ENCODE measurements at regions of chr15 and their contacts with region 1.

Region 1: DNA sequence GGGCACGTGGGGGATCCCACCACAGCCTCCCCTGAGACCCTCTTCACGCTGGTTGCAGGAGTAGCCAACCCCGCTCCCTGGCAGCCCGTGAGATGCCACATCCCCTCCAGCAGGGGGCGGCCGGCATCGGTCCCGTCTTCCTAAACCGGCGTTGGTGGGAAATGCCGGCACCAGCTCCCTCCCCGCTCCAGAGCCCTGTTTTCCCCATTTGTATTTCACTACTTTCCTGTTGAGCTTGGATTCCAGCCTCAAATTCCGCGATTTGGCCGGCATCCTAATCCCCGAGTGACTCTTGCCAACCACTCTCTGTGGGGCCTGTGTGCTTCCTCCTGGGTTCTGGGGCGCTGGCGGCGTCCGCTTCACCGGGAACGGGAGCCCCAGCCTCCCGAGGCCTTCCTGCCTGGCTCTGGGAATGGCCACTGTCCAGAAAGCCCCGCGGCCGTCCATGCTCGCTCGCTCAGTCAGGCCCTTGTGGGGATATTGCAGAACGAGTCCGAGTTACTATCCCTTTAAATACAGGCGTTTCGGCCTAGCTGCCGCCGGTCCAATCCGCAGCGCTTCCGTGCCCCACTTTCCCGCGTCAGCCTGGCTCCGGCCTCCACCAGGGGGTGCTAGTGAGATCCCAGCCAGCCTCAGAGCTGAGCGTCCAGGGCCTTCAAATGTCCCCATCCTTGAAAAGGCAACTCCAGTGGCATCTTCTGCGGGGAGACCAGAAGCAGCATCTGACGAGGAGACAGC is 8.1 kb upstream of the ADAMTS17 start:
- DNase-seq: peak; percentile 95 to 96
- ATAC-seq: peak; percentile 89 to 97
- H3K4me3 ChIP-seq: peak overlapping the region; percentile 60
- H3K27ac ChIP-seq: peak overlapping the region; percentile 90 to 97
- H3K4me1 ChIP-seq: peaks cover 9% of the 10 kb centered on the region
- CTCF ChIP-seq: peak; percentile 75
- EP300 ChIP-seq: no peak
- POLR2A ChIP-seq: no peak
- RAD21 ChIP-seq: peak; percentile 46 to 71

Region 2: DNA sequence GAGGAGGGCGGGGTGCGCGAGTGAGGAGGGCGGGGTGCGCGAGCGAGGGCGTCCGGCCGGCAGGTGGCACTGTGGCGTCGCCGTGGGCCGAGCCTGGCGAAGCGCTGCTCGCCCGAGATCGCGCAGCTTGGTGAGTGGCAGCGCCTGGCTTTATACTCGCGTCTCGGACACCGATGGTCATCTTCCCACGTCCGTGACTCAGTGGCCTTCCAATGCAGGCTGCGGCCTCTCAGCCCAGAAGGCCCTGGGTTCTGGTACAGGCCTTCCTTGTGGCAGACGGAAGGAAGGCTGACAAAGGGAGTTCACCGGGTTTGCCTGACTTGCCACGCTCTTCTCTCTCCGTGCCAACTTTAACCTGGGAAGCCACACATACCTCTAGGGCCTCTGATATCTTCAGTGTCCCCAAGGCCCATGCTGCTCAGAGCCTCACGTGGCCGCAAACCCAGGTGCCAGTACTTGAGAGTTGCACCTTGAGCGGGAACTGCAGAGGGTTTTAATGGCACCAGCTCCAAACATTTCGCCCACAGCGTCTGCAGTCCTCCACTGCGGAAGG is 421.4 kb before region 1 on chr15:
- CTCF ChIA-PET with region 1: interaction called, 25 read pairs
- POLR2A ChIA-PET with region 1: no interaction called
- DNase-seq: peak; percentile 69 to 79
- ATAC-seq: peak; percentile 91 to 96
- H3K4me3 ChIP-seq: peak overlapping the region; percentile 45
- H3K27ac ChIP-seq: peak overlapping the region; percentile 47 to 82; a peak in 5 of 6 replicates
- H3K4me1 ChIP-seq: peaks cover 6% of the 10 kb centered on the region; the same call in 2 of the 3 replicates
- CTCF ChIP-seq: peak; percentile 64
- EP300 ChIP-seq: no peak
- POLR2A ChIP-seq: no peak; the same call in 1 of the 2 replicates
- RAD21 ChIP-seq: peak; percentile 59 to 74

Region 3: DNA sequence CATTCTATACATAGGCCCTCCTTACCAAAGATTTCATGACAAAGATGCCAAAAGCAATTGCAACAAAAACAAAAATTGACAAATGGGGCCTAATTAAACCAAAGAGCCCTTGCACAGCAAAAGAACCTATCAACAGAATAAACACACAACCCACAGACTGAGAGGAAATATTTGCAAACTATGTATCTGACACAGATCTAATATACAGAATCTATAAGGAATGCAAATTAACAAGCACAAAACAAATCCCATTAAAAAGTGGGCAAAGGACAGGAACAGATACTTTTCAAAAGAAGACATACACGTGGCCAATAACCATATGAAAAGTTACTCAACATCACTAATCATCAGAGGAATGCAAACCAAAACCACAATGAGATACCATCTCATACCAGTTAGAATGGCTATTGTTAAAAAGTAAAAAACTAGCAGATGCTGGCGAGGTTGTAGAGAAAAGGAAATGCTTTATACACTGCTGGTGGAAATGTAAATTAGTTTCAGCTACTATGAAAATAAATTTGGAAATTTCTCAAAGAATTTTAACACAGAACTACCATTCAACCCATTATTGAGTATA is 58.9 kb before region 1 on chr15:
- CTCF ChIA-PET with region 1: no interaction called
- POLR2A ChIA-PET with region 1: no interaction called
- DNase-seq: no peak
- ATAC-seq: no peak
- H3K4me3 ChIP-seq: no peak overlapping the region
- H3K27ac ChIP-seq: no peak overlapping the region
- H3K4me1 ChIP-seq: no peaks in the 10 kb centered on the region
- CTCF ChIP-seq: no peak
- EP300 ChIP-seq: no peak
- POLR2A ChIP-seq: no peak
- RAD21 ChIP-seq: no peak

Region 4: GRCh38 chr15:100330629-100331215 is 19.1 kb before region 1 on chr15:
- CTCF ChIA-PET with region 1: interaction called, 167 read pairs
- POLR2A ChIA-PET with region 1: no interaction called
- DNase-seq: no peak
- ATAC-seq: no peak
- H3K4me3 ChIP-seq: no peak overlapping the region
- H3K27ac ChIP-seq: no peak overlapping the region
- H3K4me1 ChIP-seq: no peaks in the 10 kb centered on the region
- CTCF ChIP-seq: no peak
- EP300 ChIP-seq: no peak
- POLR2A ChIP-seq: no peak
- RAD21 ChIP-seq: no peak

Region 5: GRCh38 chr15:100394736-100395440 is 45.0 kb after region 1 on chr15:
- CTCF ChIA-PET with region 1: interaction called, 13 read pairs
- POLR2A ChIA-PET with region 1: no interaction called
- DNase-seq: no peak
- ATAC-seq: no peak
- H3K4me3 ChIP-seq: no peak overlapping the region
- H3K27ac ChIP-seq: no peak overlapping the region
- H3K4me1 ChIP-seq: no peaks in the 10 kb centered on the region
- CTCF ChIP-seq: no peak
- EP300 ChIP-seq: no peak
- POLR2A ChIP-seq: no peak
- RAD21 ChIP-seq: no peak

Region 6: GRCh38 chr15:100500226-100500990 is 150.5 kb after region 1 on chr15:
- CTCF ChIA-PET with region 1: interaction called, 11 read pairs
- POLR2A ChIA-PET with region 1: no interaction called
- DNase-seq: no peak
- ATAC-seq: no peak
- H3K4me3 ChIP-seq: no peak overlapping the region
- H3K27ac ChIP-seq: no peak overlapping the region
- H3K4me1 ChIP-seq: no peaks in the 10 kb centered on the region
- CTCF ChIP-seq: no peak
- EP300 ChIP-seq: no peak
- POLR2A ChIP-seq: no peak
- RAD21 ChIP-seq: no peak

Region 7: DNA sequence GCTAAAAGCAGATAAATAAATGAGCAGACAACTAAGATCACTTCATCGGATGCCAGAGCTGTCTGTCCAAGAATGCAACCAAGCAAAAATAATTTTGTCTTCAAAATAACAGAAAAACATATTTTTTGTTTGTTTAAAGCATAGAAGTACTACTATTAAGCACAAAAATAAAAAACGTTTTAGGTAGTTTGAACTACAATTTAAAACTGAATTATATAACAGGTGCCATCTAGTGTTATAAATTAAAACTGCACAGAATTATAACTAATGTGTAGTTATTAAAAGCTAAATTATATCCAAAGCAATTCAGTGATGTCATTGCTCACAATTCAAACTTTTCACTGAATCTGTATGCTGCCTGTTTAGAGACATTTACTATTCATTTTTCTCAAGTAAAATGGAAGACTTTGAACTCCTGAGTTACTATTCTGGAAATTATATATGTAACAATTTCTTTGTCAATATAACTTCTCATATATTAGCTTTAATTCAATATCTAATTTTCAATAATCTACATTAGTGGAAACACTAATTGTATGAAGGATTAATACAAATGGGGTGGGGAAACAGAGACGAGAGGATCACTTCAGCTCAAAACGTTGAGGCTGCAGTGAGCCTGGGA is 222.6 kb after region 1 on chr15:
- CTCF ChIA-PET with region 1: interaction called, 120 read pairs
- POLR2A ChIA-PET with region 1: interaction called, 11 read pairs
- DNase-seq: peak in 1 of 2 experiments; percentile 29
- ATAC-seq: no peak
- H3K4me3 ChIP-seq: no peak overlapping the region
- H3K27ac ChIP-seq: no peak overlapping the region
- H3K4me1 ChIP-seq: no peaks in the 10 kb centered on the region
- CTCF ChIP-seq: peak; percentile 59
- EP300 ChIP-seq: no peak
- POLR2A ChIP-seq: no peak
- RAD21 ChIP-seq: peak; percentile 36 to 57; a peak in 4 of 5 replicates